MCF 10A (cell line): ENCODE measurements at regions of chr14 and their contacts with region 1.

Region 1: DNA sequence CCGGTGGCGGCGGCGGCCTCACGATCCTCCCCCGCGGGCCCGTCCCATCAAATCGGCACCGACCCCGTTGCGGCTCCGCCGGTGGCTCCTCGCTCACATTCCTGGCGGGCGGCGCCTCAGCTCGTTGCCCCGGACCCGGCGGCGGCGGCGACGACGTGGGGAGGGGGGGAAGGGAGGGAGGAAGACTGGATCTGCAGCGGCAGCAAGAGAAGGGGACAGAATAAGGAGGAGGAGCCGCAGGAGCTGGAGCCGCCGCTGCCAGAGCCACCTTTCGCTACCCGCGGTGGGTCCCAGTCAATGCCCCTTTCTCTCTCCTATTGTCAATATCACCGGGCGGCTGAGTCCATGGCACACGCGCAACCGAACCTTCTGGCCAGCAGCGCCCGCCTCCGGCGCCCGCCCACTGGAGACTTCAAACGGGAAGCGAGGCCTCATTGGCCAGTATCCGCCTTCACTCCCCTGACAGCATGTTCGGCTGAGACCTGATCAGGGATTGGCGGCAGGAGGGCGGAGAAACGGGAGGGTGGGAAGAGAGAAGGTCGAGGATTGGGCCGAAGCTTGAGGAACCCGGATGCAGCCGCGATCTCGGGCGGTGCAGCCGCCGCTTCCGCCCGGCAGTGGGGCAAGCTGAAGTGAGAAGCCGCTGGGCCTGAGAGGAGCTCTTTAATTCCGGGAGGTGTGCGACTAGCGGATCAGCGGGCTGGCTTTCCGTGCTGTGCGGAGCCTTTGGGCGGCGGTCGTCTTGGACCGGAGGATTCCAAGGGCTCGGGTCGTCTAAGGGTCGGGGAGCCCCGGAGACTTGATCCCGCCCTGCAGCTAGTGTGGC is at the start of gene PPP2R5E:
- DNase-seq: peak; percentile 99
- H3K4me3 Mint-ChIP-seq: peak within 1 kb of the TSS; percentile 89
- H3K27ac Mint-ChIP-seq: peak within 1 kb of the TSS; percentile 87
- H3K4me1 Mint-ChIP-seq: peaks cover 18% of the 10 kb centered on the region
- H3K27me3 Mint-ChIP-seq: no peaks in the 10 kb centered on the region
- CTCF ChIP-seq: no peak
- total RNA-seq, gene PPP2R5E: 46.4 and 49.7 TPM in 2 replicates

Region 2: DNA sequence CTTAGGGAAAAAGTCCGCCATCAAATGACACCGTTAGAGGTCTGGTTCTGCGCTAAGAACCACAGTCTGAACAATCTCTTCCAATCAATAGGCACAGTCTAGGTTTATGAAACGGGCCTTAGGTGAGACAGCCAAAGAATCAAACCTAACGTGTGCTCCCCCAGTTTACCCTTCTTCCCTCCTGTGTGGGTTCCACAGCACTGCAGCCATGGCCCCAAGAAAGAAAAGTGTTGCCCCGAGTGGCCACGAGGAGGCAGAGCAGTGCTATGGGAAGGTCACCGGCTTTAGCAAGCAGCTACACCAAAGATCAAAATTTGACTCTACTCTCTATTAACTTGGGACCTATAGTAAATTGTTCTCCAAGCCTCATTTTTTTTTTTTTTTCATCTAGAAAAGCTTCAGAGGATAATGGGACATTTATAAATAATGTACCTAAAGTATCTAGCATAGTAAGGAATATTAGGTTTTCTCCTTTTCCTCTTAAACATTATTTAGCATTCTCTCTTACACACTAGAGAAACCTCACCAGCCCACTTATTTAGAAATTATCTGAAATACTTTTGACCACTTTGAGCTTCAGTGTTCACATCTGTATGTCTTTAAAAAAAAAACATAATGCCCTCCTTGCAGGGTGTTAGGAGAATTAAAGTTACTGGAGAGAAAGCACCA is 154.3 kb before region 1 on chr14:
- CTCF ChIA-PET with region 1: interaction called, 20 read pairs
- POLR2A ChIA-PET with region 1: interaction called, 13 read pairs
- intact Hi-C with region 1: loop called (anchors 1 kb)
- DNase-seq: peak; percentile 66
- H3K4me3 Mint-ChIP-seq: no peak overlapping the region
- H3K27ac Mint-ChIP-seq: no peak overlapping the region
- H3K4me1 Mint-ChIP-seq: no peaks in the 10 kb centered on the region
- H3K27me3 Mint-ChIP-seq: no peaks in the 10 kb centered on the region
- CTCF ChIP-seq: peak; percentile 76

Region 3: GRCh38 chr14:63454863-63455622 is 88.2 kb before region 1 on chr14:
- CTCF ChIA-PET with region 1: no interaction called
- POLR2A ChIA-PET with region 1: interaction called, 14 read pairs
- intact Hi-C with region 1: no loop called
- DNase-seq: peak; percentile 62
- H3K4me3 Mint-ChIP-seq: no peak overlapping the region
- H3K27ac Mint-ChIP-seq: no peak overlapping the region
- H3K4me1 Mint-ChIP-seq: peaks cover 27% of the 10 kb centered on the region
- H3K27me3 Mint-ChIP-seq: no peaks in the 10 kb centered on the region
- CTCF ChIP-seq: no peak

Region 4: DNA sequence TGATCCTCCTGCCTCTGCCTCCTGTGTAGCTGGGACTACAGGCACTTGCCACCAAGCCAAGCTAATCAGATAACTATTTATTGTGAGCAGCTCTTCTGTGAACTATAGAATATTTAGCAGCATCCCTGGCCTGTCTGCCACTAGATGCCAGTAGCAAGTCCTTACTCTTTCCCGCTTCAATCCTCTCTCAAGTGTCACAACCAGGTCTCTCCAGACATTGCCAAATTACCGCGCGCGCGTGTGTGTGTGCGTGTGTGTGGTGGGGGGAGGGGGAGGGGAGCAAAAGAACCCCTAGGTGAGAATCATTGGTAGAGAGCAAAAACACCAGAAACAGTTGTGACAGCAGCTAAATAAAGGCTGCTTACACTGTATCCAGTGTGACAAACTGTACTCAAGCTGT is 50.0 kb before region 1 on chr14:
- CTCF ChIA-PET with region 1: no interaction called
- POLR2A ChIA-PET with region 1: interaction called, 15 read pairs
- intact Hi-C with region 1: no loop called
- DNase-seq: no peak
- H3K4me3 Mint-ChIP-seq: no peak overlapping the region
- H3K27ac Mint-ChIP-seq: peak overlapping the region; percentile 69
- H3K4me1 Mint-ChIP-seq: peaks cover 6% of the 10 kb centered on the region
- H3K27me3 Mint-ChIP-seq: no peaks in the 10 kb centered on the region
- CTCF ChIP-seq: no peak

Region 5: GRCh38 chr14:63641473-63642228 is 98.4 kb after region 1 on chr14 and contains the start of gene WDR89:
- CTCF ChIA-PET with region 1: no interaction called
- POLR2A ChIA-PET with region 1: interaction called, 65 read pairs
- intact Hi-C with region 1: loop called (anchors 5 kb)
- DNase-seq: peak; percentile 99
- H3K4me3 Mint-ChIP-seq: peak within 1 kb of the TSS; percentile 86
- H3K27ac Mint-ChIP-seq: peak within 1 kb of the TSS; percentile 99
- H3K4me1 Mint-ChIP-seq: peaks cover 18% of the 10 kb centered on the region
- H3K27me3 Mint-ChIP-seq: no peaks in the 10 kb centered on the region
- CTCF ChIP-seq: peak; percentile 67
- total RNA-seq, gene WDR89: 14.3 and 17.4 TPM in 2 replicates

Region 6: DNA sequence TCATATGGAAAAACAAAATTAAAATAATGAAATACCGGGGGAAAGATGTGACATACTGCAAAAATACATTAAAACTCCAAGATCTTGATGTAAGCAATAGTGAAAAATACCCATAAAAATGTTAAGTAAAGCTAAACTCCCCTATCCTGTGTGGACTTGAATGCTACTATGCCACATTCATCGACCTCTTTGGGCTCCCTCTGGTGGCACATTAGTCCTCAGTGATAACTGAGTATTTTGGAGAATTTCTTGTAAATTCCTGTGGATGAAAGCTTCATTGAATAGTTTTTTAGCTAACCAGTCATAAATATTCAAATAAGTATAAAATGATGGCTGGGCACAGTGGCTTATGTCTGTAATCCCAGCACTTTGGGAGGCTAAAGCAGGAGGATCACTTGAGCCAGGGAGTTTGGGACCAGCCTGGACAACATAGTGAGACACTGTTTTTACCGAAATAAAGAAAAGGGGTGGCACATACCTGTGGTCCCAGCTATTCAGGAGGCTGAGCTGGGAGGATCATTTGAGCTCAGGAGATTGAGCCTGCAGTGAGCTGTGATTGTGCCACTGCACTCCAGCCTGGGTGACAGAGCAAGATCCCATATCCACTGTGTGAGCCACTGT is 227.1 kb after region 1 on chr14:
- CTCF ChIA-PET with region 1: no interaction called
- POLR2A ChIA-PET with region 1: interaction called, 3 read pairs
- intact Hi-C with region 1: loop called (anchors 5 kb)
- DNase-seq: peak; percentile 65
- H3K4me3 Mint-ChIP-seq: no peak overlapping the region
- H3K27ac Mint-ChIP-seq: no peak overlapping the region
- H3K4me1 Mint-ChIP-seq: no peaks in the 10 kb centered on the region
- H3K27me3 Mint-ChIP-seq: no peaks in the 10 kb centered on the region
- CTCF ChIP-seq: peak; percentile 51